Cardiac septum (tissue), 1 donor: ENCODE measurements at regions of chr6 and their contacts with region 1.

Region 1: DNA sequence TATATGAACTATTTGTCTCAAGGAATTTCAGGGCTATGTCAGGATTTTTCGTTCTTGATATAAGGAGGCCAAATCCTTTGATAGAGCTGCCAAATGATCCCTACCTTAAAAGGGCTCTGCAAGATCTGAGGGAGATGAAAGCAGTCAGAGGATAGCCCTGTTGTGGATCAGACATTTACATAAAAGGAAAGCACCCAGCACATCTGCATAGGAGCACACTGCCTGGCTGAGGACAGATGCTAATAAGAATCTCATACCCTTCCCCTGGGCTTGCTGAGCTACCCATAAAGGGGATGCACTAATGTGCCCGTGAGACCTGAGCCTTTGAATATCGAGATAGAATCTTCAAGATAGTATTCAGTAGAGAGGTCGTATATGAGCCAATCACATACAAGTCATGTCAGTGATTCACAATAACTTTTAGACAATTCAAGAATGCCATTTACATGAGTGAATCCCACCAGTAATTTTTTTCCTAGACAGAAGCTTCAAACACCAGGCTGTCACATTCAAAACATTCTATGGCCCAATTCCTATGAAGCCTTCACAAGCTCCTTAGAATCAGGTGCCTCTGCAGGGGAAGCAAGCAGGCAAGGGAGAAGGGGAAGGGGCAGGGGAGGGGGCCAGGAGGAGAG is 71.1 kb downstream of the STMND1 start:
- DNase-seq: no peak

Region 2: GRCh38 chr6:17042422-17043147 is 130.4 kb before region 1 on chr6:
- intact Hi-C with region 1: no loop called
- DNase-seq: no peak

Region 3: DNA sequence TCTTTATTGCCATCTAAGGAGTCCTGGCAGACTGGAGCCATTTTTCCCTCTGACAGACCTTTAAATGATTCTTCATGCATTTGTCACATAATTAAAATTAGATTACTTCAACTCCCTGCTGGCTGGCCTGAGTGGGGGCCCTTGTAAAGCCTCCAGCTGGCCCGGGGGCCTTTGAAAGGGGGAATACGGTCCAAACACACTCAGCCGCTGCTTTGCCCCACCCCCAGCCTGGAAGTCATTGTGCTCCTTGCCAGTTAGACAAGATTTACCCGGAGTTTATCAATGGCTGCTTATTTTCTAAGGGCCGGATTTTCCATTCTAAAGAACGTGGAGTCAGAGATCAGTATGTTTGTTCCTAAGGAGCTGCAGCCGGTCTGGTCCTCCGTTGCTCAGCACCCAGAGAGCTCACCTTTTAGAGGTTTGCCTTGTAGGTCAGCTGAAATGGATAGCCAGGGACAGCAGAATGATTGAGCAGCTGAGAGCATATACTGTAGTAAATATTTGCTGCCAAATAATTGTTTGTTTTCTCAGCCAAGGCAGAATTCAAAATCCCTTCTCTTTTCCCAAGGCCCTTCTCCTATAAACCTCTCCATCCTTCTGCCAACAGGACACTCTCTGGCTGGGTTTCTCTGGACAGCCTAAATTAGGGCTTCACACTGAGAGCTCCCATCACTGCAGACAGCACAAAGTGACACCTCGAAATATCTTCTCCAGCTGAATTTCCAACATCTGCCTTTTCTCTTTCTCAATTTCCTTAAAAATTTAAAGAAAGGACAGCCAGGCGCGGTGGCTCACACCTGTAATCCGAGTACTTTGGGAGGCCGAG is 39.8 kb after region 1 on chr6:
- intact Hi-C with region 1: loop called (anchors 5 kb)
- DNase-seq: peak; percentile 77